Left colon (tissue), 2 donors: ENCODE measurements at regions of chr17 and their contacts with region 1.

Region 1: DNA sequence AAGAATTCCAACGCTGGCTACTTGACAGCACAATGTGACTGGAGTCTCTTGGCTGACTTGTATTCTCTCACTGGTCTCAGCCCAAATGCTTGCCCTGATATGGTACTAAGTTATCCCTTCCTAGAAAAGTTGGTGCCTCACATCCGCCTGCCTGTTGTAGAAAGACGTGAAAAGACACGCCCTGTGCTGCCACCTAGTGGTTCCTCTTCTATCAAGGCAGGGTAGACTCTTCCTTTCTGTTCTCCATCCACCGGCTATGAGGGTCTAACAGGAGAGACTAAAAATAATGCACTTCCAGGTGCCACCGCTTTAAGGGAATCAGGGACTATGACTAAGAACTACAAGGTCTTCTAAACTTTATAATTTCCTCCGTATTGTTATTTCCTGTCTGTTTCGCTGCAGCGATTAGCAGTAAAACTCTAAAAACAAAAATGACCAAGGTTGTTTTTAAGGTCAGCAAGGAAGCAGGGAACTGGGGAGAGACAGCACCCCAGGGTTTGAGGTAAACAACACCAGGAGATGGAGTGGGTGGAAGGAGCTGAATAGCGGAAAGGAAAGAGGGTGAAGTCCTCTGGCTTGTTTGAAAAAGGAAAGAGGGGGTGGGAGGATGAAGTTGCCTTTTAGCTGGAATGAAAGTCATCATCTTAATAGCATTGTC is 109.5 kb downstream of the YPEL2 start:
- DNase-seq: peak; percentile 87 to 96
- ATAC-seq: peak; percentile 97

Region 2: DNA sequence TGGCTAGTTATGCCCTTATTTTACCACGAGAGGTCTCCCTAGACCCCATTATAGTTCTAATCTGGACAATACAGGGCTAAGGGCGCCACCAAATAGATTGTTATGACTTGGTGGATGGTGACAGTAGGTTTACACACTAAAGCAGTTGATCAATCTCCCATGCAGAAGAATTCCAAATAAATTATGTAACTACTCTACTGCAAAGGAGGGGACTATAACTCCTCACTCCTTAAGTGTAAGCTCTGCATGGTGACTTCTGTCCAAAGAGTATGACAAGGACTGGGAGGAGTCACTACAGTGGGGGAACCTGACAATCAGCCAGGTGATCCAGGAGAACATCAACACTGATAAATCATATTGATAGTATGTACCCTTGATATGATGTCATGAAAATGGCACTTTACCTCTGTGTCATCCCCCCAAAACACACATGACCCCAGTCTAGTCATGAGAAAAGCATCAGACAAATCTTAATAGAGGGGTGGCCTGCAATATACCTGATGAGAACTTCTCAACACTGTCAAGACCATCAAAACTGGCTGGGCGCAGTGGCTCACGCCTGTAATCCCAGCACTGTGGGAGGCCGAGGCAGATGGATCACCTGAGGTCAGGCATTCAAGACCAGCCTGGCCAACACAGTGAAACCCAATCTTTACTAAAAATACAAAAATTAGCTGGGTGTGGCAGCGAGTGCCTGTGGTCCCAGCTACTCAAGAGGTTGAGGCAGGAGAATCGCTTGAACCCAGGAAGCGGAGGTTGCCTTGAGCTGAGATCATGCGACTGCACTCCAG is 129.6 kb before region 1 on chr17:
- intact Hi-C with region 1: loop called in 1 of 2 experiments (anchors 5 kb)
- DNase-seq: peak in 1 of 2 donors; percentile 21
- ATAC-seq: peak; percentile 98